ENCODE measurements at regions of chr7 and their contacts with region 1.

Region 1: GRCh38 chr7:107890962-107891635 is at the start of gene DLD:
- DNase-seq: peak; percentile 95
- ATAC-seq: peak; percentile 98
- H3K4me3 ChIP-seq: peak within 1 kb of the TSS; percentile 72 to 86 (median 83)
- H3K4me3 Mint-ChIP-seq: peak within 1 kb of the TSS; percentile 99
- H3K27ac ChIP-seq: peak within 1 kb of the TSS; percentile 91 to 97
- H3K27ac Mint-ChIP-seq: peak within 1 kb of the TSS; percentile 97
- H3K4me1 ChIP-seq: peaks cover 9 to 26% of the 10 kb centered on the region in 2 donors
- H3K4me1 Mint-ChIP-seq: peaks cover 46% of the 10 kb centered on the region
- H3K27me3 ChIP-seq: no peaks in the 10 kb centered on the region
- H3K27me3 Mint-ChIP-seq: peaks cover 4% of the 10 kb centered on the region
- CTCF ChIP-seq: no peak
- total RNA-seq, gene DLD: 47.9 and 48.8 TPM in 2 replicates

Region 2: GRCh38 chr7:106598663-106599342 is 1292.3 kb before region 1 on chr7:
- CTCF ChIA-PET with region 1: no interaction called
- POLR2A ChIA-PET with region 1: no interaction called
- intact Hi-C with region 1: loop called (anchors 2 kb)
- DNase-seq: peak; percentile 87
- ATAC-seq: peak; percentile 99
- H3K4me3 ChIP-seq: peak overlapping the region in 1 of 5 experiments; percentile 41
- H3K4me3 Mint-ChIP-seq: peak overlapping the region; percentile 72
- H3K27ac ChIP-seq: no peak overlapping the region
- H3K27ac Mint-ChIP-seq: peak overlapping the region; percentile 69
- H3K4me1 ChIP-seq: peaks cover 0 to 7% of the 10 kb centered on the region in 2 donors
- H3K4me1 Mint-ChIP-seq: peaks cover 6% of the 10 kb centered on the region
- H3K27me3 ChIP-seq: no peaks in the 10 kb centered on the region
- H3K27me3 Mint-ChIP-seq: no peaks in the 10 kb centered on the region
- CTCF ChIP-seq: no peak

Region 3: GRCh38 chr7:107044347-107045194 is 846.5 kb before region 1 on chr7 and contains the start of gene PRKAR2B:
- CTCF ChIA-PET with region 1: no interaction called
- POLR2A ChIA-PET with region 1: no interaction called
- intact Hi-C with region 1: loop called (anchors 10 kb)
- DNase-seq: peak; percentile 86
- ATAC-seq: peak; percentile 94
- H3K4me3 ChIP-seq: peak within 1 kb of the TSS; percentile 41 to 69 (median 53)
- H3K4me3 Mint-ChIP-seq: peak within 1 kb of the TSS; percentile 92
- H3K27ac ChIP-seq: no peak within 1 kb of the TSS
- H3K27ac Mint-ChIP-seq: peak within 1 kb of the TSS; percentile 69
- H3K4me1 ChIP-seq: peaks cover 7 to 13% of the 10 kb centered on the region in 2 donors
- H3K4me1 Mint-ChIP-seq: peaks cover 13% of the 10 kb centered on the region
- H3K27me3 ChIP-seq: peaks cover 0 to 26% (median 24%) of the 10 kb centered on the region in 4 experiments
- H3K27me3 Mint-ChIP-seq: peaks cover 37% of the 10 kb centered on the region
- CTCF ChIP-seq: no peak
- total RNA-seq, gene PRKAR2B: 0.39 and 0.81 TPM in 2 replicates

Region 4: GRCh38 chr7:107563775-107564552 is 327.1 kb before region 1 on chr7 and contains the starts of genes COG5 and DUS4L:
- CTCF ChIA-PET with region 1: no interaction called
- POLR2A ChIA-PET with region 1: no interaction called
- intact Hi-C with region 1: loop called (anchors 10 kb)
- DNase-seq: peak; percentile 92
- ATAC-seq: peak; percentile 93
- H3K4me3 ChIP-seq: peak within 1 kb of the TSS; percentile 86 to 98 (median 93)
- H3K4me3 Mint-ChIP-seq: peak within 1 kb of the TSS; percentile 88
- H3K27ac ChIP-seq: peak within 1 kb of the TSS; percentile 88 to 94
- H3K27ac Mint-ChIP-seq: peak within 1 kb of the TSS; percentile 94
- H3K4me1 ChIP-seq: peaks cover 18 to 23% of the 10 kb centered on the region in 2 donors
- H3K4me1 Mint-ChIP-seq: peaks cover 50% of the 10 kb centered on the region
- H3K27me3 ChIP-seq: no peaks in the 10 kb centered on the region
- H3K27me3 Mint-ChIP-seq: no peaks in the 10 kb centered on the region
- CTCF ChIP-seq: no peak
- total RNA-seq, gene COG5: 73.0 and 74.8 TPM in 2 replicates
- total RNA-seq, gene DUS4L: 17.6 and 18.7 TPM in 2 replicates

Region 5: DNA sequence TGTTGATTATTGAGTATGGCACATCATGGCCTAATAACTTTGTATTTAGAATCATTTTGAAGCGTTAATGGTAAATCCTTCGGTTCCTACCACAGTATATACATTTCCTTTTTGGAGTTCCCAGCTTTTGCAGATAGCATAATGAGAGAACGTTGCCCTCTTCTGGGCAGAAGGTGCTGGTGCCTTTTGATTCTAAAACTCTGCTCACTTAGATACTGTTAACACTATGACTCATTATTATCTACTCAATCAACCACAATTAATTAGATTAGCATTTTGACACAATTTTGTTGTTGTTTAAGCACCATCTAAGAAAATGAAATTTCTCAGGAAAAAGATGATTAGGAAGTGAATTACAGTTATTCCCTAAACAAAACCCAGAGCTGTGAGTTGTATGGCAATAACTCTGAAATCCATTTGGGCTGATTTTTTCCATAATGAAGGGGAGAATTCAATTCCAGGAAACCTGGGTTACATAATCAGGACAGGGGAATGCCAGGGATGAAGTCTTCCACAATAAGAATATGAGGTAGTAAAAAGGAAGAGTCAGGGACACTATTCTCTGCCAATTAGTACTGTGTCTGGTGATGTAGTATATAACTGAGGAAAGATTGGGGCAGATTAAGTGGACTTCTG is 11.6 kb before region 1 on chr7:
- CTCF ChIA-PET with region 1: interaction called, 36 read pairs
- POLR2A ChIA-PET with region 1: no interaction called
- intact Hi-C with region 1: no loop called
- DNase-seq: peak; percentile 52
- ATAC-seq: peak; percentile 58
- H3K4me3 ChIP-seq: no peak overlapping the region
- H3K4me3 Mint-ChIP-seq: no peak overlapping the region
- H3K27ac ChIP-seq: no peak overlapping the region
- H3K27ac Mint-ChIP-seq: no peak overlapping the region
- H3K4me1 ChIP-seq: no peaks in the 10 kb centered on the region
- H3K4me1 Mint-ChIP-seq: peaks cover 3% of the 10 kb centered on the region
- H3K27me3 ChIP-seq: peaks cover 0 to 14% (median 3%) of the 10 kb centered on the region in 4 experiments
- H3K27me3 Mint-ChIP-seq: peaks cover 42% of the 10 kb centered on the region
- CTCF ChIP-seq: peak; percentile 87

Region 6: GRCh38 chr7:107902381-107902780 is 11.3 kb after region 1 on chr7:
- CTCF ChIA-PET with region 1: no interaction called
- POLR2A ChIA-PET with region 1: no interaction called
- intact Hi-C with region 1: no loop called
- DNase-seq: no peak
- ATAC-seq: no peak
- H3K4me3 ChIP-seq: no peak overlapping the region
- H3K4me3 Mint-ChIP-seq: no peak overlapping the region
- H3K27ac ChIP-seq: no peak overlapping the region
- H3K27ac Mint-ChIP-seq: no peak overlapping the region
- H3K4me1 ChIP-seq: peaks cover 6 to 7% of the 10 kb centered on the region in 2 donors
- H3K4me1 Mint-ChIP-seq: peaks cover 12% of the 10 kb centered on the region
- H3K27me3 ChIP-seq: no peaks in the 10 kb centered on the region
- H3K27me3 Mint-ChIP-seq: no peaks in the 10 kb centered on the region
- CTCF ChIP-seq: no peak

Region 7: DNA sequence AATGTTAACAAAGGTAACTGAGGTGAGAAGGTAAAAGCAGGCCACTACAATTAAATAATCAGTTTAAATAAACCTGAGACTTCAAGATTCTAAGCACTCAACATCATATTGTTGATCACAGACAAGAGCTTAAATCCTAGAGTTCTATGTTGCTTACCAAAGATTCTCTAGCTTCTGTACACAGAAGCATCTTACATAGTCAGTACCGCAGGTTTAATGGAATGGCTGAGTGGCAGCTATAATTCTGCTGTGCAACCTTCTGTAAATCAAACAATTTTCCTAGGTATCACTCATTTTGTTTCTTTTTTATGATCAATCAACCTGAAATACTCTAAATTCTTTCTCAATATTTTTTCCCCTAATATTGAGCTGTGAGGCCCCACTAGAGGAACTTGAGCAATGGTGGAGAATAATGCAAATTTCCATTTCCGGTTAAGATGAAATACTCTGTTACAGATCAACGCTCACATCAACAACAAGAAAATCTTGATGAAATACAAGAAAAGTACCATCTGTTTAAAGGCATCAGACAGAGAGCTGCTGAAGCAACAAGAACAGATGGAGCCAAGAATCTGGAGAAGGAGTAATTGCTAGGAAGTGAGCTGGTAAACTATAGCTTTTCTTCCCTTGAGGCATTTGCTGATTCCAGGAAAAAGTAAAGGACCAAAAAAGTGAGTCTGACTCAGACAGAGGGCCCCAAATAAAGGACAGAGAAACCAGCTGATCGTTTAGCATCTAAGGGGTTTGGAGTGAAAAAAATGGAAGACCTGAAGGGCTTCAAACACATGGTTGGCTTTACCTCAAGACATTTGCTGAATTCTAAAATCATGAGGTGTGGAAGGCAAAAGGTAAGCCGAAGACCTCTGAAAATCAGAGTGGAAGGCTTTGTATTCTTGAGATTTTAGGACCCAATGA is 612.3 kb after region 1 on chr7:
- CTCF ChIA-PET with region 1: no interaction called
- POLR2A ChIA-PET with region 1: no interaction called
- intact Hi-C with region 1: loop called (anchors 1 kb)
- DNase-seq: peak; percentile 81
- ATAC-seq: peak; percentile 94
- H3K4me3 ChIP-seq: peak overlapping the region; percentile 29 to 51 (median 40)
- H3K4me3 Mint-ChIP-seq: peak overlapping the region; percentile 90
- H3K27ac ChIP-seq: peak overlapping the region; percentile 91 to 95
- H3K27ac Mint-ChIP-seq: peak overlapping the region; percentile 100
- H3K4me1 ChIP-seq: peaks cover 37 to 40% of the 10 kb centered on the region in 2 donors
- H3K4me1 Mint-ChIP-seq: peaks cover 51% of the 10 kb centered on the region
- H3K27me3 ChIP-seq: no peaks in the 10 kb centered on the region
- H3K27me3 Mint-ChIP-seq: no peaks in the 10 kb centered on the region
- CTCF ChIP-seq: no peak

Measured in B cell (primary cell).